Panc1 (cell line): ENCODE measurements at regions of chr20 and their contacts with region 1.

Region 1: DNA sequence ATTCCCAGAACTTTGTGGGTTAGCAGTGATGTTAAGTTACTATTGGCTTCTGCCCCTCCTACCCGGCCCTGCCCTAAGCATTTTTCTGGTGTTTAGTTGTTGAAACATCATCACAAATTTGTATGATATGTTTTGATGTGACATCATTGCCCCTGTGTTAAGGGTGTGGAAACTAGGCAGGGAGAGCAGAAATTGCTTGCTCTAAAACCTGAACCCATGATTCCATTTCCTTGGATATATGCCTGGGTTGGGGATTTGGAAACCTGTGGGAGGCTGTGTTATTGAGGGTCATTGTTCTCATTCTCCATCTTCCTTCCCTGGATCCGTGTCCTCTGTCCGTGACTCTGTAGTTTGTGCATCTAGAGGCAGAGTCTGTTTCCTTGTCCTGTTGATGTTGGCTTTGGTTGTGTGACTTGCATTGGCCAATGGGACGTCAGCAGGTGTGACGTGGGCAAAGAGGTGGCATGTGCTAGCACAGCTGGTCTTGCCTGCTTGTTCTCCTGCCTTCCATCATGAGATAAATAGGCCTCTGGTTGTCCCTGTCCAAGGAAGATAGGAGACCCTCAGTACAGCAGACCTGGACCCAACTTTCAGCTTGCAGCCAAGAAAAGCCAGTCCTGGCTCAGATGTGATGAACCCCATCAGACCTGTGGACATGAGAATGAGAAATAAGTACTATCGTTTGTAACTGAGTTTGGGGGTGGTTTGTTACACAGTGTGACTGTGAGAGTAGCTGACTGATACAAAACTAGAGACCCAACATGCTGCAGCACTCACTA is 195.0 kb upstream of the SULF2 start:
- DNase-seq: no peak
- ATAC-seq: no peak
- H3K4me3 ChIP-seq: no peak overlapping the region
- H3K27ac ChIP-seq: no peak overlapping the region
- H3K4me1 ChIP-seq: 0 out of 2 replicates have a peak, but pooled peaks cover 2% of the 10 kb centered on the region
- H3K27me3 ChIP-seq: no peaks in the 10 kb centered on the region
- CTCF ChIP-seq: no peak

Region 2: DNA sequence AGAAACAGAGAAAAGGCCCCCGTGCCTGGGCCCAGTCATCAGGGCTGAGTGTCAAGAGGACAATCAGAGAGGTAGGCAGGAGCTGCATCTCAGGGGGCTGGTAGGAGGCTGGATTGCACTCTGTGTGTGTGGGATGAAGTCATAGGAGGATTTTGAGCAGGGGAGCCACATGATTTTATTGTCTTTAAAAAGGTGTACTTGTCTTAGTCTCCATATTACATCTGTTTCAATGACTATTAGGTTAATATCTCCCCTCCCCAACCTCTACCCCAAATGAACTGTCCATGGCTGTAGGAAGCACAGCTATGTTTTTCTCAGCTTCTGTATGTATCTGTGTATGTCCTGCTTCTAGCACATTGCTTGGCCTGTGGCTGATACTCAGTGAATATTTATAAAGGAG is 36.1 kb before region 1 on chr20:
- CTCF ChIA-PET with region 1: interaction called, 11 read pairs
- POLR2A ChIA-PET with region 1: no interaction called
- in situ Hi-C with region 1: no loop called
- intact Hi-C with region 1: no loop called
- DNase-seq: no peak
- ATAC-seq: no peak
- H3K4me3 ChIP-seq: no peak overlapping the region
- H3K27ac ChIP-seq: no peak overlapping the region
- H3K4me1 ChIP-seq: no peaks in the 10 kb centered on the region
- H3K27me3 ChIP-seq: 0 out of 2 replicates have a peak, but pooled peaks cover 2% of the 10 kb centered on the region
- CTCF ChIP-seq: no peak

Region 3: DNA sequence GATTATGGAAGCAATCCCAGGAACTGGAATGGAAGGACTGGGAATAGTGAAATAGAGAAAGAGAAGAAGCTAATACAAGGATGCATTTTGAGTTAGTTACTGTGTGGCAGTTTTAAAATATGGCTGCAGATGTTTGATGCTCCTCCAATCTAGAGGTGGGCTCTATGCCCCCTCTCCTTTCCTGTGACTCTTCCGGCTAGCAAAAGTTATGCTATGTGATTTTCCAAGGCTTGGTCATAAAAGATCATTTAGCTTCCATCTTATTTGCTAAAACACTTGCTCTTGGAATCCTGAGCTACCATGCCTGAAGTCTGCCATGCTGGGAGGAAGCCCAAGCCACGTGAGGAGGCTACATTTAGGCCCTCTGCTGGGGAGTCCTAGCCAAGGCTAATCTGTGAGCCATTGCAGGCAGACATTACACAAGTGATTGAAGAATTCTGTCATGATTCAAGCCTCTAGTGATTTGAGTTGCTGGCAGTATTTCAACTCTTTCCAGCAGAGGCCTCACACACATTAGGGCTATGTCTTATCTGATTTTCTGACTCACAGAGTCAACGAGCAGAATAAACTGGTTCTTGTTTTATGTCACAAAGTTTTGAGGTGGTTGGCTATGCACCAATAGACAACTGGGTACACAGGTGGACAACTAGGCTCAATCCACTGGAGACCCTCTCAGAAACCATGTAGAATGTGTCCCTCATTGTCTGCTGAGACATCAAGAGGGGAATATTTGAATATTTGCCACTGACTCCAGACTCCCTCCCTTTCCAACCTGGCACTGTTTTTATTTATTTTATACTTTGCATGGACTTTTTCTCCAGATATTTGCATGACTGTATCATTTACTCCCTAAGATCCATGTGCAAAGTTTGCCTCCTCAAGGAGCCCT is 32.1 kb after region 1 on chr20:
- CTCF ChIA-PET with region 1: no interaction called
- POLR2A ChIA-PET with region 1: no interaction called
- in situ Hi-C with region 1: no loop called
- intact Hi-C with region 1: no loop called
- DNase-seq: no peak
- ATAC-seq: peak; percentile 58; the same call in 1 of the 2 replicates
- H3K4me3 ChIP-seq: no peak overlapping the region
- H3K27ac ChIP-seq: no peak overlapping the region
- H3K4me1 ChIP-seq: no peaks in the 10 kb centered on the region
- H3K27me3 ChIP-seq: peaks cover 2% of the 10 kb centered on the region; the same call in 1 of the 2 replicates
- CTCF ChIP-seq: no peak